ENCODE measurements at regions of chr10 and their contacts with region 1.

Region 1: DNA sequence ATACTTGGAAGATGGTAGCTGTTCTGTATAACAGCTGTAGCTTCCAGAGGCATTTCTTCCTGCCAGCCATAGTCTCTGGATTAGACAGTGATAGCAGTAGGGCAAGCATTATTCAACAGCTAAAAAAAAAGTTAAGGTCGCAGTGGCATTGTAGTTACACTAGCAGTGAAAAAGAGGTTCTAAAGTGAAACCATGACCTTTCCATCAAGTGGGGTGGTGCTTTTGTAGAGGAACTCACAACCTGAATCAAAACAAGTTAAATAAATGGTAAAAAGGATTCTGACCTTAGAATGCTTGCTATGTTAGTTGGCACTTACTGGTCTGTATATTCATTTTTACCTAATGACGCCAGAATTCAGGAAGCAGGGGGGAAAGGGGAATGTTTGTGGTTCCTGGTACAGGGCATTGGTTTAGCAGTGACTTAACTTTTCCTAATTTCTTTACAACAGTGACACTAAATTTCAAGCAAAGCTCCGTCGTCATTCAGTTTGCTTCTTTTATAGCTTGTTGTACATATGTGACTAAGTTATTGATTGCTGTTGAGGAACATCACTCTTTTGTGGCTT is 55.0 kb downstream of the GBF1 start:
- DNase-seq: no peak
- ATAC-seq: peak; percentile 75
- H3K4me3 Mint-ChIP-seq: no peak overlapping the region
- H3K27ac Mint-ChIP-seq: peak overlapping the region; percentile 48
- H3K4me1 Mint-ChIP-seq: peaks cover 24% of the 10 kb centered on the region
- H3K27me3 Mint-ChIP-seq: no peaks in the 10 kb centered on the region

Region 2: DNA sequence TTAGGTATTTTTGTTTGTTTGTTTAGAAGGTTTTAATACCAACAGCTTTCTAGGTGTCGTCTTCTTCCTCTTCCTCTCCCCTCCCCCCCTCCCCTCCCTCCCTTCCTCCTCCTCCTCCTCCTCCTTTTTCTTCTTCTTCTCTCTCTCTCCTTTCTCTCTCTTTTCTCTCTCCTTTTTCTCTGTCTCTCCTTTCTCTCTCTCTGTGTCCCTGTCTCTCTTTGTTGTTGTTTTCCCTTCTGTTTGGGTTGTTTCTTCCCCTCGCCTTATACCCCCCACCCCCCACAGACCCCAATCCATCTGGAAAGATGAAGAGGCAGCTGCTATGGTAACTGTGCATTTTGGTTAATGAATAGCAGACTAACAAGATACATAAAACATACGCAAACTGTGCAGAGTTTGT is 870.9 kb before region 1 on chr10:
- CTCF ChIA-PET with region 1: no interaction called
- POLR2A ChIA-PET with region 1: no interaction called
- intact Hi-C with region 1: no loop called
- DNase-seq: no peak
- ATAC-seq: no peak
- H3K4me3 Mint-ChIP-seq: no peak overlapping the region
- H3K27ac Mint-ChIP-seq: no peak overlapping the region
- H3K4me1 Mint-ChIP-seq: peaks cover 4% of the 10 kb centered on the region
- H3K27me3 Mint-ChIP-seq: no peaks in the 10 kb centered on the region

Region 3: GRCh38 chr10:102231357-102232318 is 68.7 kb before region 1 on chr10:
- CTCF ChIA-PET with region 1: interaction called, 10 read pairs
- POLR2A ChIA-PET with region 1: no interaction called
- intact Hi-C with region 1: no loop called
- DNase-seq: peak; percentile 89
- ATAC-seq: peak; percentile 78
- H3K4me3 Mint-ChIP-seq: peak overlapping the region; percentile 63
- H3K27ac Mint-ChIP-seq: no peak overlapping the region
- H3K4me1 Mint-ChIP-seq: peaks cover 17% of the 10 kb centered on the region
- H3K27me3 Mint-ChIP-seq: peaks cover 43% of the 10 kb centered on the region

Region 4: DNA sequence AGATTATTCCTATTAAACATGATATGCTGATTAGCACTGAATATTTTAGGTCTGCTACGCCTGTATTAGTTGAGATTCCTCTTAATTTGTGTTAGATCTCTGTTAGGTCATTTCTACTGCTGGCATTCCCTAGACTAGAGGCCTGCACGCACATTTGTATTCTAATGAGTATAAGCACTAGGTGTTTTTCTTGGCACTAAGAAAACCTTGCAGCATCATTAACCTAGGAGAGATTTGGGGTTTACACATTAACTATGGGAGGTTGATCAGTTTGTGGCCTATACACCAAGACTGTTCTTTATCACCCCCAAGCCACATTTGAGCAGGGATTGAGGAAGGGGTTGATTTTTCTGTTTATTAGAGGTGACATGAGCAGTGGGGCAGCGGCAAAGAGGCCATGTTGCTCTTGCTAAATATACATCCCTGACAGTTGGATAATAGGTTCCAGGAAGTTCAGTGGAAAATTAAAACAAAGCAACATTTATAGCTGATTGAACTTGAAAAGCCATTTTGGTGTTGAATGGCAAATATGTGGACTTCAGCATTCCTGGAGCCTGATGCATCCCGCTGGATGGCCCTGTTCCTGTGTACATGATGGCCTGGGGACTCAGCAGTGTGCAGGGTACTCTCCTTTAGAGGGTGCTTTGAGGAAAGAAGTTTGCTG is 10.1 kb after region 1 on chr10:
- CTCF ChIA-PET with region 1: interaction called, 11 read pairs
- POLR2A ChIA-PET with region 1: interaction called, 4 read pairs
- intact Hi-C with region 1: no loop called
- DNase-seq: no peak
- ATAC-seq: no peak
- H3K4me3 Mint-ChIP-seq: no peak overlapping the region
- H3K27ac Mint-ChIP-seq: no peak overlapping the region
- H3K4me1 Mint-ChIP-seq: peaks cover 53% of the 10 kb centered on the region
- H3K27me3 Mint-ChIP-seq: no peaks in the 10 kb centered on the region